Transverse colon (tissue), 4 donors: ENCODE measurements at regions of chr5 and their contacts with region 1.

Region 1: GRCh38 chr5:138077065-138077696 is 6.7 kb upstream of the WNT8A start:
- DNase-seq: peak; percentile 72
- H3K4me3 ChIP-seq: no peak overlapping the region
- H3K27ac ChIP-seq: no peak overlapping the region
- H3K4me1 ChIP-seq: no peaks in the 10 kb centered on the region
- H3K27me3 ChIP-seq: no peaks in the 10 kb centered on the region
- CTCF ChIP-seq: peak; percentile 74 to 86 (median 81)
- EP300 ChIP-seq: no peak
- POLR2A ChIP-seq: no peak

Region 2: DNA sequence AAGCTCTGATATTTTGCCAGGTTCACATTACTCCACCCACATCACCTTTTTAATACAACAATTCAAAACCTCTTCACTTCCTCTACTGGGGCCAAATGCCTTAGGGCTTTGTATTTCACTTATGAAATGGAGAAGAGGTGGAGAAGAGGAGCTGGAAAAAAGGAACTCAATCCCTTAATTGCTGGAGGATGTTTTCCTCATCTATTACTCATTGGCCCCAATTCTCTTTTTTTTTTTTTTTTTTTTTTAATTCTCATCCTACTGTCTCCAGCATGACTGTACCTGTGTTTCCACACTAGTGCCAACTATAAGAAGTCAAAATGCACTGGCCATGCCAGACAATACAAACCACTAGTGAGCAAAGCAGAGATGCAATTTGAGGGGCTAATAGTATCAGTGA is 65.2 kb before region 1 on chr5:
- in situ Hi-C with region 1: no loop called
- intact Hi-C with region 1: no loop called
- DNase-seq: no peak
- H3K4me3 ChIP-seq: no peak overlapping the region
- H3K27ac ChIP-seq: no peak overlapping the region
- H3K4me1 ChIP-seq: no peaks in the 10 kb centered on the region
- H3K27me3 ChIP-seq: no peaks in the 10 kb centered on the region
- CTCF ChIP-seq: no peak
- EP300 ChIP-seq: no peak
- POLR2A ChIP-seq: no peak

Region 3: GRCh38 chr5:138035605-138036537 is 41.3 kb before region 1 on chr5:
- in situ Hi-C with region 1: no loop called
- intact Hi-C with region 1: loop called (anchors 5 kb)
- DNase-seq: peak; percentile 66
- H3K4me3 ChIP-seq: no peak overlapping the region
- H3K27ac ChIP-seq: peak overlapping the region in 1 of 4 donors; percentile 43
- H3K4me1 ChIP-seq: peaks cover 0 to 18% (median 13%) of the 10 kb centered on the region in 4 donors
- H3K27me3 ChIP-seq: no peaks in the 10 kb centered on the region
- CTCF ChIP-seq: peak; percentile 74 to 90 (median 81)
- EP300 ChIP-seq: no peak
- POLR2A ChIP-seq: no peak

Region 4: GRCh38 chr5:138128334-138128733 is 51.2 kb after region 1 on chr5:
- in situ Hi-C with region 1: loop called in 1 of 4 experiments (anchors 10 kb)
- intact Hi-C with region 1: loop called (anchors 2 kb)
- DNase-seq: no peak
- H3K4me3 ChIP-seq: no peak overlapping the region
- H3K27ac ChIP-seq: no peak overlapping the region
- H3K4me1 ChIP-seq: peaks cover 0 to 4% (median 0%) of the 10 kb centered on the region in 4 donors
- H3K27me3 ChIP-seq: no peaks in the 10 kb centered on the region
- CTCF ChIP-seq: no peak
- EP300 ChIP-seq: no peak
- POLR2A ChIP-seq: no peak

Region 5: DNA sequence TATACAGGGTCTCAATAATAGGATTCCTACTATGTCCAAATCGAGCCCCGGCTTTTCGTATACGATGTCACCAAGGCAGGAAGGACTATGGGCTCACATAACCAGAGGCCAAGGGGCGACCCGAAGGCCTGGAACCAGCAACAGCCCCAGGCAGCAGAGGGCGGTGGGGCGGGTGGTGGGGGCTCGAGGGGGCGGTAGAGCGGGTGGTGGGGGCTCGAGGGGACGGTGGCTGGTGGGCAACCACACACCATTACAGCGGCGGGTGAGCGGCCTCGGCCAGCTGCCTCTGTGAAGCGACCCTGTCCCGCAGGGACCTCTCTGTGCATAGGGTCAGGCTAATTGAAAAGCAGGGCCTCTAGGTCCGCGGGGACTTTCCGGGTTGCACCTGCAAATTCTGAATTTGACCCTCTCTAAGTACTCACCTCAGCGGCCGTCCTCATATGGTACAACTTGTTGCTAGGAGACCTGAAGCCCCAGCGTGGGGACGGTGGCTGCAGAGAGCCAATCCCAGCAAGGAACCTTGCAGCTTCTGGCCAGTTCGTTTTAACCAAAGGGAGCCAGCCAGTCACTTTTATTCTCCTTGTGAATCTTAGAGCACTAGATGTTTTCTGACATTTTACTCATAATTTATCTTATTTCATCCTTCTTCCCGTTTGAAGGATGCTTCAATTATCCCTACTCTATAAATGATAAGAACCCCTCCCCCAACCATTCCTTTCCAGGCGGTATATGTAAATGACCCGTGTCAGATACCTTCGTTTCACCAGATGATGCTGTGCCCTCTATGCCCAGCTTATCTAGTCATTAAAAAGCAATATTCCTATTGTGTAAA is 62.0 kb after region 1 on chr5 and contains the start of gene NME5:
- in situ Hi-C with region 1: loop called in 2 of 4 experiments (anchors 5 to 10 kb)
- intact Hi-C with region 1: no loop called
- DNase-seq: peak; percentile 63
- H3K4me3 ChIP-seq: peak within 1 kb of the TSS; percentile 18 to 56 (median 38)
- H3K27ac ChIP-seq: no peak within 1 kb of the TSS
- H3K4me1 ChIP-seq: peaks cover 0 to 15% (median 3%) of the 10 kb centered on the region in 4 donors
- H3K27me3 ChIP-seq: peaks cover 3% of the 10 kb centered on the region
- CTCF ChIP-seq: no peak
- EP300 ChIP-seq: no peak
- POLR2A ChIP-seq: no peak
- total RNA-seq, gene NME5: not detected

Region 6: DNA sequence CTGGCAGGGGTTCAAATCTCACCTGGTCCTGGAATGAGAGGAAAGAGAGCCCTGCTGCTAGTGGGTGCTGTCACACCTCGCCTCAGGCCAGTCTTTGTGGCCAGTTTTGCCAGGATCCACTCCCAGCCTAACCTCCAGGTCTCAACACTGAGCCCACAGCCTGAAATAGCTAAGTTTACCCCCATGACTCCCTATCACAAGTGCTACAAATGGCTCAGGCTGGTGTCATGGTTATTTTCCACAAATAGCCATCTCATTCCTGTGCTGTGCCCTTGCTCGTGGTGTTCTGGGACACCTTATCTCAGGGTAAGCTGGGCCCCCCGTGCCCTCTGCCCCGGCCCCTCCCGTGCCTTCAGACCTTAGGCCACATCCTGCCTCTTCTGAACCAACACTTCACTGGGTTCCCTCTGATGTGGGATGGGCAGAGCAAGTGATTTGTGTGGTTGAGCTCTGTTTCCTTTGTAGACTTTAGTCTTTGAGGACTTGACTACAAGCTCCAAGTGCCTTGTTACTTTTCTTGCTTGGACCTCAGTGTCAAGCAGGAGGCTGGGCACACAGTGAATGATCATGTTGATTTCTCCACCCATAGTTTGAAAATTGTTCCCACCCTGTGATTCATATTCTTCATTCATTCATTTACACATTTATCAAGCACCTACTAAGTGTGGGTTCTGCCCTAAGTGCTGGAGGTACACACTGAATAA is 591.3 kb after region 1 on chr5:
- in situ Hi-C with region 1: no loop called
- intact Hi-C with region 1: no loop called
- DNase-seq: no peak
- H3K4me3 ChIP-seq: no peak overlapping the region
- H3K27ac ChIP-seq: no peak overlapping the region
- H3K4me1 ChIP-seq: no peaks in the 10 kb centered on the region
- H3K27me3 ChIP-seq: no peaks in the 10 kb centered on the region
- CTCF ChIP-seq: no peak
- EP300 ChIP-seq: no peak
- POLR2A ChIP-seq: no peak